Posterior cingulate gyrus (tissue), 11 donors: ENCODE measurements at regions of chr9 and their contacts with region 1.

Region 1: GRCh38 chr9:11992866-11993265 is 700.3 kb upstream of the TYRP1 start:
- DNase-seq: no peak

Region 2: DNA sequence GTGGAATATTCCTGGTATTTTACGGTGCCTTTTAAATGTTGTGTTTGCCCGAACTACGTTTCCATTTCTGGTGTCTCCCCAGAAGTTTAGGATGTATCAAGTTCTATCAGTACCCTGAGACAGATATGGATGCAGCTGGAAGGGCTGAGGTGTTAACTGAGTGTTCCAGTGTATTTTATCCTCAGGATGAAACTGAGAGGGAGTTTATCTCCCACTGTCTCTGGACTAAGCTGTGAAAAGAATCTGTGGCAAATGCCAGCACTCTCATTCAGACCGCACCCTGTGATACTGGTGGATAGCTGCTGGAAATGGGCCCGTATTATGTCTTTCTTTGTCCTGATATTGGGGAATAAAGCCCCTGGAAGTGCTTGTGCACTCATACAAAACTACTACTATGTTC is 186.9 kb before region 1 on chr9:
- intact Hi-C with region 1: no loop called
- DNase-seq: no peak

Region 3: DNA sequence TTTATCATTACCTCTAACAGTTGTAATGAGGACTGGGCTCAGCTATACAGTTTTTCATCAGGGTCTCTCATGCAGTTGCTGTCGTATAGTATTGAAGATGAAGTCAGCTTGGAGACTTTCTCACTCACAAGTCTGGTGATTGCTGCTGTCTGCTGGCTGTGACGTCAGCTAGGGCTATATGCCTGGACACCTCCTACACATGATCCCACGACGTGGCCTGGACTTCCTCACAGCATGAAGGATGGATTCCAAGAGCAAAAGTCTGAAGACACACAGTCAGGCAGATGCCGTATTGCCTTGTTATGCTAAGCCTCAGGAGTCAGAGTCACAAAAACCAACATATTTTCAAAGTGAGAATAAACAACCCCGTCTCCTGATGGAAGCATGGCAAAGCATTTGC is 975.2 kb after region 1 on chr9:
- intact Hi-C with region 1: loop called (anchors 5 kb)
- DNase-seq: no peak